ENCODE measurements at regions of chr7 and their contacts with region 1.

Region 1: DNA sequence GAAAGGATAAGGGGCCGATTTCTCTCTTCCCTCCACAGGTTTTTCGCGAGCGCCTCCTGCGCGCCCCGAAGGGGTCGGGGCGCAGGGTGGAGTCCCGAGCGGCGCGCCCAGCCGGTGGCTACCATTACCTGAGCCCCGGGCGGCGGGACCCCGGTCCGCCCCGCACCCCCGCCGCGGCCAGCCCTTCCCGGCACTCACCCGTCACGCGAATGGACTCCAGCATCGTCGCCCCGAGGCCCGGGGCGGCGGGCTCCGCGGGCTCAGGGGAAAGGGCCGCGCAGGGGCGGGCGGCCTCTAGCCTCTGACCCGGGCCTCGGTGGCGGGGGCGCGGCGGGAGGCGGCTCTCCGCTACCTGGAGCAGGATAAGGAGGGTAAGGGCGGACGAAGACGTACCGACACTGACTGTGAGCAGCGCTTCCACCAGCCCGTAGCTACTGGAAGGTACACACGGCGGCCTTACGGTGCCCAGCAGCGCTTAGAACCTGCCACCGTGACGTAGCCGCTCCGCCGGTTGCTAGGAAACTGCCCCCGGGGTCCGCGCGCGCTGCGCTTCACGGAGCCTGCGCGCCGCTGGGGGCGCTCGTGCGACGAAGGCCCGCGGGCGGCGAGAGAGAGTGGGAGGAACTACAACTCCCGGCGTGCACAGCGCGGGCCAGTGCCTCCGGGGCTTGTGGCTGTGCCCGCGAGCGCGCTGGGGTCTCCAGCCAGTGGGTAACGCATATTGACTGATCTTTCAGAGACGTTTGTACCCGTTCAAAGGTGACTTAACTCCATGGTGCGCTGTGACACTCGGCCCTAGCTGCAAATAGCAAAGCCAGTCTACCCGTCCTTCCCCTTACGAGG is 22.7 kb upstream of the ANLN start:
- DNase-seq: peak; percentile 96
- ATAC-seq: peak; percentile 97
- H3K4me3 ChIP-seq: peak overlapping the region; percentile 58 to 85 (median 65)
- H3K4me3 Mint-ChIP-seq: peak overlapping the region; percentile 97
- H3K27ac ChIP-seq: peak overlapping the region in 1 of 2 donors; percentile 76
- H3K27ac Mint-ChIP-seq: peak overlapping the region; percentile 61
- H3K4me1 ChIP-seq: peaks cover 3 to 8% of the 10 kb centered on the region in 2 donors
- H3K4me1 Mint-ChIP-seq: peaks cover 8% of the 10 kb centered on the region
- H3K27me3 ChIP-seq: peaks cover 0 to 2% (median 1%) of the 10 kb centered on the region in 4 experiments
- H3K27me3 Mint-ChIP-seq: peaks cover 7% of the 10 kb centered on the region
- CTCF ChIP-seq: peak; percentile 86

Region 2: GRCh38 chr7:35037526-35038339 is 1329.2 kb before region 1 on chr7:
- CTCF ChIA-PET with region 1: no interaction called
- POLR2A ChIA-PET with region 1: no interaction called
- intact Hi-C with region 1: loop called (anchors 2 kb)
- DNase-seq: peak; percentile 96
- ATAC-seq: peak; percentile 85
- H3K4me3 ChIP-seq: peak overlapping the region; percentile 50 to 89 (median 76)
- H3K4me3 Mint-ChIP-seq: peak overlapping the region; percentile 95
- H3K27ac ChIP-seq: peak overlapping the region in 1 of 2 donors; percentile 63
- H3K27ac Mint-ChIP-seq: peak overlapping the region; percentile 89
- H3K4me1 ChIP-seq: peaks cover 15 to 18% of the 10 kb centered on the region in 2 donors
- H3K4me1 Mint-ChIP-seq: peaks cover 25% of the 10 kb centered on the region
- H3K27me3 ChIP-seq: no peaks in the 10 kb centered on the region
- H3K27me3 Mint-ChIP-seq: no peaks in the 10 kb centered on the region
- CTCF ChIP-seq: peak; percentile 87

Region 3: GRCh38 chr7:35694781-35695472 is 672.0 kb before region 1 on chr7 and contains the start of gene HERPUD2:
- CTCF ChIA-PET with region 1: no interaction called
- POLR2A ChIA-PET with region 1: no interaction called
- intact Hi-C with region 1: loop called (anchors 10 kb)
- DNase-seq: peak; percentile 94
- ATAC-seq: peak; percentile 91
- H3K4me3 ChIP-seq: peak within 1 kb of the TSS; percentile 78 to 98 (median 94)
- H3K4me3 Mint-ChIP-seq: peak within 1 kb of the TSS; percentile 98
- H3K27ac ChIP-seq: peak within 1 kb of the TSS; percentile 82 to 98
- H3K27ac Mint-ChIP-seq: peak within 1 kb of the TSS; percentile 97
- H3K4me1 ChIP-seq: peaks cover 40 to 44% of the 10 kb centered on the region in 2 donors
- H3K4me1 Mint-ChIP-seq: peaks cover 57% of the 10 kb centered on the region
- H3K27me3 ChIP-seq: no peaks in the 10 kb centered on the region
- H3K27me3 Mint-ChIP-seq: no peaks in the 10 kb centered on the region
- CTCF ChIP-seq: no peak
- total RNA-seq, gene HERPUD2: 54.6 and 58.8 TPM in 2 replicates

Region 4: GRCh38 chr7:36152756-36153570 is 214.0 kb before region 1 on chr7 and contains the start of gene EEPD1:
- CTCF ChIA-PET with region 1: no interaction called
- POLR2A ChIA-PET with region 1: no interaction called
- intact Hi-C with region 1: loop called (anchors 1 kb)
- DNase-seq: peak; percentile 100
- ATAC-seq: peak; percentile 91
- H3K4me3 ChIP-seq: peak within 1 kb of the TSS; percentile 51 to 79 (median 72)
- H3K4me3 Mint-ChIP-seq: peak within 1 kb of the TSS; percentile 88
- H3K27ac ChIP-seq: peak within 1 kb of the TSS in 1 of 2 donors; percentile 40
- H3K27ac Mint-ChIP-seq: peak within 1 kb of the TSS; percentile 67
- H3K4me1 ChIP-seq: peaks cover 12% of the 10 kb centered on the region in 2 donors
- H3K4me1 Mint-ChIP-seq: peaks cover 16% of the 10 kb centered on the region
- H3K27me3 ChIP-seq: peaks cover 0 to 19% (median 2%) of the 10 kb centered on the region in 4 experiments
- H3K27me3 Mint-ChIP-seq: peaks cover 5% of the 10 kb centered on the region
- CTCF ChIP-seq: no peak
- total RNA-seq, gene EEPD1: 3.8 and 4.1 TPM in 2 replicates

Region 5: GRCh38 chr7:36389371-36390198 is 22.6 kb after region 1 on chr7 and contains the start of gene ANLN:
- CTCF ChIA-PET with region 1: interaction called, 4 read pairs
- POLR2A ChIA-PET with region 1: no interaction called
- intact Hi-C with region 1: loop called (anchors 1 kb)
- DNase-seq: peak; percentile 87
- ATAC-seq: peak; percentile 98
- H3K4me3 ChIP-seq: peak within 1 kb of the TSS; percentile 73 to 85 (median 76)
- H3K4me3 Mint-ChIP-seq: peak within 1 kb of the TSS; percentile 88
- H3K27ac ChIP-seq: peak within 1 kb of the TSS; percentile 48 to 55
- H3K27ac Mint-ChIP-seq: peak within 1 kb of the TSS; percentile 68
- H3K4me1 ChIP-seq: peaks cover 12 to 17% of the 10 kb centered on the region in 2 donors
- H3K4me1 Mint-ChIP-seq: peaks cover 27% of the 10 kb centered on the region
- H3K27me3 ChIP-seq: peaks cover 0 to 5% (median 0%) of the 10 kb centered on the region in 4 experiments
- H3K27me3 Mint-ChIP-seq: peaks cover 5% of the 10 kb centered on the region
- CTCF ChIP-seq: no peak
- total RNA-seq, gene ANLN: 0.32 and 0.56 TPM in 2 replicates

Region 6: DNA sequence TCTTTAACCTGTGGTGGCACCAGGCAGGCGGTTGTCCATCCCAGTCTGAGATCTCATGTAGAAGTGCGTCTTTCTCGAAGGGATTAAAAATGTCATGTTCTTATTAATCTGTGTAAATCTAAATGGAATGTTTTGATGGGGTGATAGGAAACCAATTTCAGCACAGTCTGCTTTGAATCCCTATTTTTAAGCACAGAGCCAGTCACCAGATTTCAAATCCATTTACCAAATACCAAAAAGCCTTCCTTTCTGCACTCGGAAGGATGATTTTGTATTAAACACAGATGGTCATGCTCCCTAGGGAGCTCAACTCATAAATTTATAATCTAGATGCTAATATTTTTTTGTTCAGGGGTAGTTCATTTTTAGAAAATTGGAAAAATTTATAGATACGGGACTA is 518.0 kb after region 1 on chr7:
- CTCF ChIA-PET with region 1: no interaction called
- POLR2A ChIA-PET with region 1: no interaction called
- intact Hi-C with region 1: no loop called
- DNase-seq: no peak
- ATAC-seq: no peak
- H3K4me3 ChIP-seq: no peak overlapping the region
- H3K4me3 Mint-ChIP-seq: no peak overlapping the region
- H3K27ac ChIP-seq: no peak overlapping the region
- H3K27ac Mint-ChIP-seq: no peak overlapping the region
- H3K4me1 ChIP-seq: no peaks in the 10 kb centered on the region
- H3K4me1 Mint-ChIP-seq: peaks cover 5% of the 10 kb centered on the region
- H3K27me3 ChIP-seq: no peaks in the 10 kb centered on the region
- H3K27me3 Mint-ChIP-seq: no peaks in the 10 kb centered on the region
- CTCF ChIP-seq: no peak

Region 7: DNA sequence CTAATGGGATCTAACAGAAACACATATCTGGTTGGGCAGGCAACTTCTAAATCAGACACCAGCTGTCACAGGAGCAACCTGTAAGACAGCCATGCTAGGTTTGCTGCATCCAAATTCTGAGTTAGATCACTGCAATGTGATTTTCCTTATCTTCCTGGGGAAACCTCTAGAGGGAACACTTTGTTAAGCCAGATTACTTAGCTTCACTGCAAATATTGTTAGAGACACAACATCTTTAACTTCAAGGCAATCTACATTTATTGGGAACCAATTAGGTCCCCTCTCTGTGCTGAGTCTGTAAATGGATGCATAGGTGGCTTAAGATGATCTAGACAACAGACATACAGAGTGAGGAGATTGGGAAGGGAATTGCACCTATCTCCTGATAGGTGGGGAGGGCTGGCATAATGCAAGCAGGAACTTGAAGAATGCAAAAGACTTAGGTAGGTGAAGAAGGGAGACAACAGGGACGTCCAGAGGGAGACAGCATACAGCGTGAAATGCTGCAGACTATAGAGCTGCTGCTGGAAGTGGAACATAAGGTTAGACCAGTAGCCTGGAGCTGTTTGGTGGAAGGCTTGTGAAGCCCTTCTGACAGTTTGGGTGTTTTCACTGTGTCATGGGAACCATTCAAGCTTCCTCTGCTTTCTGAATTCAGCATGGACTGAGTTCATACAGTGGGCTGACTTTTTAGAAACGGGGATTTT is 1191.5 kb after region 1 on chr7:
- CTCF ChIA-PET with region 1: no interaction called
- POLR2A ChIA-PET with region 1: no interaction called
- intact Hi-C with region 1: no loop called
- DNase-seq: no peak
- ATAC-seq: no peak
- H3K4me3 ChIP-seq: no peak overlapping the region
- H3K4me3 Mint-ChIP-seq: no peak overlapping the region
- H3K27ac ChIP-seq: no peak overlapping the region
- H3K27ac Mint-ChIP-seq: no peak overlapping the region
- H3K4me1 ChIP-seq: no peaks in the 10 kb centered on the region
- H3K4me1 Mint-ChIP-seq: no peaks in the 10 kb centered on the region
- H3K27me3 ChIP-seq: peaks cover 0 to 5% (median 1%) of the 10 kb centered on the region in 4 experiments
- H3K27me3 Mint-ChIP-seq: peaks cover 9% of the 10 kb centered on the region
- CTCF ChIP-seq: no peak

Region 8: DNA sequence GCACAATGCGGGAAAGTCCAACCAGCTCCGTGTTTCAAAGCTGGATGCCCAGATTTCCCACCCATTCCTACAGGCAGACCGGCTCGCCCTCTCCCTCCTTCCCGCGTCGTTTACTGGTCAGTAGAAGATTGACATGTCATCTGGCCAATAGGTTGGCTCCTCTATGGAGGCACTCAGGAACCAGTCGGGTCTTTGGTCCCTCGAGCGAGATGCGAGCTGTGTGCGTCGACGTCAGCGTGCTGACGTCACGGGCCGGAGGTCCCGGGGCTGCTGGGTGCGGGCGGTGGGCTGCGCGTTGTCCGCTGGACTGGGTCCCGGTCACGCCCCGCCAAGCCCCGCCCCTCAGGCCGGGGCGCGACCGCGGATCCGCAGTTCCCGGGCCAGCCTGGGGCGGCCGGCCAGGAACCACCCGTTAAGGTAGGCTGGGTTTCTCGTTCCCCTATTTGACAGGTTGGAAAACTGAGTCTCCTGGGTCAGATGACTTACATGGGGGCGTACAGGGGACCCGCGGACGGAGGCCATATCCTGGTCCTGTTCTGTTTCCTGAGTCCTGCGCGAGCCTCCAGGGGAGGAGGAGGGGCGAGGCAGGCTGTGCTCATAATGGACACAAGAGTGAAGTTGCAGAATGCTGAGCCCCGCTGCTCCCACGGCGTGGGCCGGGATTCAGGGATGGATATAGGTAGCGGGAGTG is 1811.2 kb after region 1 on chr7 and contains the start of gene STARD3NL:
- CTCF ChIA-PET with region 1: no interaction called
- POLR2A ChIA-PET with region 1: no interaction called
- intact Hi-C with region 1: loop called (anchors 2 kb)
- DNase-seq: peak; percentile 98
- ATAC-seq: peak; percentile 95
- H3K4me3 ChIP-seq: peak within 1 kb of the TSS; percentile 36 to 98 (median 91)
- H3K4me3 Mint-ChIP-seq: peak within 1 kb of the TSS; percentile 97
- H3K27ac ChIP-seq: peak within 1 kb of the TSS; percentile 81 to 93
- H3K27ac Mint-ChIP-seq: peak within 1 kb of the TSS; percentile 95
- H3K4me1 ChIP-seq: peaks cover 16 to 17% of the 10 kb centered on the region in 2 donors
- H3K4me1 Mint-ChIP-seq: peaks cover 33% of the 10 kb centered on the region
- H3K27me3 ChIP-seq: no peaks in the 10 kb centered on the region
- H3K27me3 Mint-ChIP-seq: no peaks in the 10 kb centered on the region
- CTCF ChIP-seq: no peak
- total RNA-seq, gene STARD3NL: 13.4 and 14.2 TPM in 2 replicates